Calu3 (cell line): ENCODE measurements at regions of chr19 and their contacts with region 1.

Region 1: GRCh38 chr19:7381073-7381390 is 32.3 kb downstream of the ARHGEF18 start:
- DNase-seq: no peak
- H3K4me3 Mint-ChIP-seq: no peak overlapping the region
- H3K27ac Mint-ChIP-seq: peak overlapping the region; percentile 23
- H3K4me1 Mint-ChIP-seq: no peaks in the 10 kb centered on the region
- H3K27me3 Mint-ChIP-seq: no peaks in the 10 kb centered on the region
- CTCF ChIP-seq: no peak

Region 2: GRCh38 chr19:7355151-7355820 is 25.7 kb before region 1 on chr19:
- CTCF ChIA-PET with region 1: no interaction called
- intact Hi-C with region 1: loop called (anchors 2 kb)
- DNase-seq: no peak
- H3K4me3 Mint-ChIP-seq: no peak overlapping the region
- H3K27ac Mint-ChIP-seq: no peak overlapping the region
- H3K4me1 Mint-ChIP-seq: no peaks in the 10 kb centered on the region
- H3K27me3 Mint-ChIP-seq: peaks cover 52% of the 10 kb centered on the region
- CTCF ChIP-seq: no peak

Region 3: GRCh38 chr19:7488736-7489353 is 107.8 kb after region 1 on chr19 and contains the start of gene PEX11G:
- CTCF ChIA-PET with region 1: no interaction called
- intact Hi-C with region 1: no loop called
- DNase-seq: peak; percentile 90
- H3K4me3 Mint-ChIP-seq: peak within 1 kb of the TSS; percentile 60
- H3K27ac Mint-ChIP-seq: peak within 1 kb of the TSS; percentile 70
- H3K4me1 Mint-ChIP-seq: peaks cover 9% of the 10 kb centered on the region
- H3K27me3 Mint-ChIP-seq: no peaks in the 10 kb centered on the region
- CTCF ChIP-seq: no peak
- total RNA-seq, gene PEX11G: 1.3 and 3.4 TPM in 2 replicates